ENCODE measurements at regions of chr9 and their contacts with region 1.

Region 1: GRCh38 chr9:99433555-99433954 is 211.5 kb downstream of the SEC61B start:
- DNase-seq: peak; percentile 47
- ATAC-seq: peak; percentile 99
- H3K4me3 Mint-ChIP-seq: peak overlapping the region; percentile 4
- H3K27ac Mint-ChIP-seq: peak overlapping the region; percentile 78
- H3K4me1 Mint-ChIP-seq: peaks cover 18% of the 10 kb centered on the region
- H3K27me3 Mint-ChIP-seq: no peaks in the 10 kb centered on the region
- CTCF ChIP-seq: no peak

Region 2: DNA sequence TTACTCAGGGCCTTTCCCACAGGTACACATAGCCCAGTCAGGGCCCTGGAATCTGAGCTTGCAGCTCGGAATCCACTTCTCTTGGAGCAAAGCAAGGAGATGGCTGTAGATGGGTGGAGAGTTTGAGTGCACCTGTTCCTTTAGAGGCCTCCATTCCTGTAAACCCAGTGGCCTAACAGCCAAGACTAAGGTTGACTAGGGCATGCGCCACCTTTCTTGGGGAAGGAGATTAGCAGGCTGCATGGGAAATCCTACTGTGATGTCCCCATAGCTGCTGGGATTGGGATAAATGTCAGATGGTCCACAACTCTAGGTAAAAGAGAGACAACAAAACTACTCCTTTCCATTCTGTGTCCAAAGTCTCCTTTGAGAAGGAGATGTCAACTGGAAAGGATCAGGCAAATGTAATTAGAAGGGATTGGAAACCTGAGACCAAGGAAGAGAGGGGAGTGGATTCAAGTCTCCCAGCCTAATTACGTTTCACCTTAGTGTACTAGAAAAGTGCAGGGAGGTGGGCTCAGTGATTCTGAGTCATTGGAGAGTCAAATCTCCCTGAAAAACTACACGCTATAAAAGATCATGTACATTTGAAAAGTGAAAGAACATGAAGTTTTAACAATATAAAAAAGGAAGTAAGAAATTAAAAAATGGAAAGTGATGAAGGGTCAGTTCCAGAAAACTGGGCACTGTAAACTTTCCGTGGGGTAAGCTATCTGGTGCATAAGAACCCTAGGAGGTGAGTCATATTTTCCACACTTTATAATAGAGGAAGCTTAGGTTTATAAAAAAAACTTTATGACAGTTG is 107.2 kb before region 1 on chr9:
- CTCF ChIA-PET with region 1: no interaction called
- POLR2A ChIA-PET with region 1: interaction called, 3 read pairs
- intact Hi-C with region 1: loop called (anchors 2 kb)
- DNase-seq: no peak
- ATAC-seq: peak; percentile 72
- H3K4me3 Mint-ChIP-seq: peak overlapping the region; percentile 16
- H3K27ac Mint-ChIP-seq: peak overlapping the region; percentile 76
- H3K4me1 Mint-ChIP-seq: peaks cover 19% of the 10 kb centered on the region
- H3K27me3 Mint-ChIP-seq: peaks cover 6% of the 10 kb centered on the region
- CTCF ChIP-seq: no peak

Region 3: DNA sequence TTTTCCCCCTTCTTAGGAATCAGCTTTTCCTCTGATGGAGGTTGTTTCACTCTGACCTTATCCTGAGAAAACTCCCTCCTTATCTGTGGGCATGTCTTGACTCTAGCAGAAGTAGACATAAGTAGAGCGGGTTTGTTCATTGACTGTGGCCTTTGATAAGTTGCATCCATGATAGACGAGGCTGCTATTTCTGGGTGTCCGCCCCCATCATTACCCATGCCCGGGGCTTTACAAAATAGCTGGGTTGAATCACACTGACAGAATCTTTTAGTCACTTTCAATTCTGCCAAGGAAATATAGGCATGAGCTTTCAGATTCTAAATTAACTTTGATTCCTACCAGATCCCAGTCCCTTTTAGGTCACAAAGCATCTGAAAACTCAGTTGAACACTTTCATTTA is 12.4 kb after region 1 on chr9:
- CTCF ChIA-PET with region 1: no interaction called
- POLR2A ChIA-PET with region 1: interaction called, 4 read pairs
- intact Hi-C with region 1: loop called (anchors 2 kb)
- DNase-seq: no peak
- ATAC-seq: no peak
- H3K4me3 Mint-ChIP-seq: no peak overlapping the region
- H3K27ac Mint-ChIP-seq: no peak overlapping the region
- H3K4me1 Mint-ChIP-seq: no peaks in the 10 kb centered on the region
- H3K27me3 Mint-ChIP-seq: peaks cover 4% of the 10 kb centered on the region
- CTCF ChIP-seq: no peak

Region 4: GRCh38 chr9:99465231-99465907 is 31.8 kb after region 1 on chr9:
- CTCF ChIA-PET with region 1: no interaction called
- POLR2A ChIA-PET with region 1: interaction called, 3 read pairs
- intact Hi-C with region 1: loop called (anchors 5 kb)
- DNase-seq: no peak
- ATAC-seq: no peak
- H3K4me3 Mint-ChIP-seq: no peak overlapping the region
- H3K27ac Mint-ChIP-seq: no peak overlapping the region
- H3K4me1 Mint-ChIP-seq: no peaks in the 10 kb centered on the region
- H3K27me3 Mint-ChIP-seq: no peaks in the 10 kb centered on the region
- CTCF ChIP-seq: no peak

Region 5: GRCh38 chr9:99478469-99479027 is 45.0 kb after region 1 on chr9:
- CTCF ChIA-PET with region 1: no interaction called
- POLR2A ChIA-PET with region 1: no interaction called
- intact Hi-C with region 1: no loop called
- DNase-seq: no peak
- ATAC-seq: no peak
- H3K4me3 Mint-ChIP-seq: no peak overlapping the region
- H3K27ac Mint-ChIP-seq: no peak overlapping the region
- H3K4me1 Mint-ChIP-seq: no peaks in the 10 kb centered on the region
- H3K27me3 Mint-ChIP-seq: peaks cover 2% of the 10 kb centered on the region
- CTCF ChIP-seq: no peak

Region 6: GRCh38 chr9:99488734-99489413 is 55.3 kb after region 1 on chr9:
- CTCF ChIA-PET with region 1: no interaction called
- POLR2A ChIA-PET with region 1: no interaction called
- intact Hi-C with region 1: loop called (anchors 5 kb)
- DNase-seq: no peak
- ATAC-seq: no peak
- H3K4me3 Mint-ChIP-seq: no peak overlapping the region
- H3K27ac Mint-ChIP-seq: no peak overlapping the region
- H3K4me1 Mint-ChIP-seq: peaks cover 30% of the 10 kb centered on the region
- H3K27me3 Mint-ChIP-seq: no peaks in the 10 kb centered on the region
- CTCF ChIP-seq: no peak

Region 7: GRCh38 chr9:99513441-99514112 is 80.0 kb after region 1 on chr9:
- CTCF ChIA-PET with region 1: interaction called, 3 read pairs
- POLR2A ChIA-PET with region 1: interaction called, 3 read pairs
- intact Hi-C with region 1: loop called (anchors 2 kb)
- DNase-seq: peak; percentile 22
- ATAC-seq: peak; percentile 49
- H3K4me3 Mint-ChIP-seq: peak overlapping the region; percentile 61
- H3K27ac Mint-ChIP-seq: peak overlapping the region; percentile 84
- H3K4me1 Mint-ChIP-seq: peaks cover 88% of the 10 kb centered on the region
- H3K27me3 Mint-ChIP-seq: no peaks in the 10 kb centered on the region
- CTCF ChIP-seq: no peak

Region 8: DNA sequence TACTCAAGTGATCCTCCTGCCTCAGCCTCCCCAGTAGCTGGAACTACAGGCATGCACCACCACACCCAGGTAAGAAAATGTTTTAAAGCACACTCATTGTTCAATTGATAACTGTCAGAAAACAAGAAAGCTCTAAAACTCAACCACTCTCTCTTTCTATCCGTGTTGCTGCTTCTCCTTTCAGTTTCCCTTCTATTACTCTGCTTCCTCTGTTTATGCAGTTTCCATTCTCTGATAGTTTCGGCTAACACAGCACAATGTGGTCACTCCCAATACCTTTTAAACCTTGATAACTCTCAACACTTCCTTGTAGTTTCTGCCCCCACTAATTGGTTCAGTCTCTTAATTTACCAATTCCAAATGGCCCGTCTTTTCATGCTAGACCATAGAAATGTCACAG is 328.9 kb after region 1 on chr9:
- CTCF ChIA-PET with region 1: no interaction called
- POLR2A ChIA-PET with region 1: no interaction called
- intact Hi-C with region 1: loop called (anchors 5 kb)
- DNase-seq: no peak
- ATAC-seq: peak; percentile 98
- H3K4me3 Mint-ChIP-seq: no peak overlapping the region
- H3K27ac Mint-ChIP-seq: no peak overlapping the region
- H3K4me1 Mint-ChIP-seq: no peaks in the 10 kb centered on the region
- H3K27me3 Mint-ChIP-seq: no peaks in the 10 kb centered on the region
- CTCF ChIP-seq: no peak

Region 9: DNA sequence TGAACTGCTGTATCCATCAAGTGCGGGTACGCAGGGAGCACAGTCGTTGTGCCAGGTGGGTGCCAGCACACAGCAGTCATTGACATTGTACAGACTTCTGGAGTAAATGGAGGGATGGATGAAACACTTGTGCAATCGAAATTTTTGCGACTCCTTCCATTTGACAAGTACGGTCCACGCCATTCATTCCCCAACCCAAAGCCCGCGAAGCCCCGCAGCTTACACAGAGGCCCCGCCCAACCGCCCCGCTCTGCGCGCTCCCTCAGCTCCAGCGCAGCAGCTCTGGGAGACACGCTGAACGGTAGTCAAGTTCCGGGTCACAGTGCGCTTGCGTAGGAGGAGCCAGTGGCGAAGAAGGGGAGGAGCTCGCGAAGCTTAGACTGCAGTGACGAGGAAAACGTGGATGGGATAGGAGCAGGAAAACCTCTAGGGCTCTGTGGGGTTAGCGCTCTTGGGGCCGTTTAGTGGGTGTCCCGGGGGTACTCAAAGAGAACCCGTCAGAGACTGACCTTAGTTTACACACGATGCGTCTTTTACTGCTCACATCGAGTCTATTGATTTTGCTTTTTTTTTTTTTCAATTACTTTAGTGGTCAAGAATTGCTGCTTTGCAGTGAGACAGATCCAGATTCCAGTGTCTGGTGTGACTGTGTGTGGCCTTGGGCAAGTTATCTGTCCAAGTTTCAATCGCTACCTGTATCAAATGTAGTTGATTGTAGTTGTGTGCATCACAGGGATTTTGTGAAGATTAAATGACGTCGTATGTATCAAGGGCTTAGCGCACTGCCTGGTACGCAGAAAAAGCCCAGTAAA is 978.1 kb after region 1 on chr9:
- CTCF ChIA-PET with region 1: no interaction called
- POLR2A ChIA-PET with region 1: no interaction called
- intact Hi-C with region 1: no loop called
- DNase-seq: peak; percentile 76
- ATAC-seq: peak; percentile 100
- H3K4me3 Mint-ChIP-seq: peak overlapping the region; percentile 89
- H3K27ac Mint-ChIP-seq: peak overlapping the region; percentile 78
- H3K4me1 Mint-ChIP-seq: peaks cover 14% of the 10 kb centered on the region
- H3K27me3 Mint-ChIP-seq: peaks cover 9% of the 10 kb centered on the region
- CTCF ChIP-seq: no peak